ENCODE measurements at regions of chr1 and their contacts with region 1.

Region 1: GRCh38 chr1:10398734-10399623 is at the start of gene PGD:
- DNase-seq: peak; percentile 98
- H3K4me3 Mint-ChIP-seq: peak within 1 kb of the TSS; percentile 83
- H3K27ac Mint-ChIP-seq: no peak within 1 kb of the TSS
- H3K4me1 Mint-ChIP-seq: peaks cover 25% of the 10 kb centered on the region
- H3K27me3 Mint-ChIP-seq: no peaks in the 10 kb centered on the region
- total RNA-seq, gene PGD: 94.8 to 101 TPM

Region 2: DNA sequence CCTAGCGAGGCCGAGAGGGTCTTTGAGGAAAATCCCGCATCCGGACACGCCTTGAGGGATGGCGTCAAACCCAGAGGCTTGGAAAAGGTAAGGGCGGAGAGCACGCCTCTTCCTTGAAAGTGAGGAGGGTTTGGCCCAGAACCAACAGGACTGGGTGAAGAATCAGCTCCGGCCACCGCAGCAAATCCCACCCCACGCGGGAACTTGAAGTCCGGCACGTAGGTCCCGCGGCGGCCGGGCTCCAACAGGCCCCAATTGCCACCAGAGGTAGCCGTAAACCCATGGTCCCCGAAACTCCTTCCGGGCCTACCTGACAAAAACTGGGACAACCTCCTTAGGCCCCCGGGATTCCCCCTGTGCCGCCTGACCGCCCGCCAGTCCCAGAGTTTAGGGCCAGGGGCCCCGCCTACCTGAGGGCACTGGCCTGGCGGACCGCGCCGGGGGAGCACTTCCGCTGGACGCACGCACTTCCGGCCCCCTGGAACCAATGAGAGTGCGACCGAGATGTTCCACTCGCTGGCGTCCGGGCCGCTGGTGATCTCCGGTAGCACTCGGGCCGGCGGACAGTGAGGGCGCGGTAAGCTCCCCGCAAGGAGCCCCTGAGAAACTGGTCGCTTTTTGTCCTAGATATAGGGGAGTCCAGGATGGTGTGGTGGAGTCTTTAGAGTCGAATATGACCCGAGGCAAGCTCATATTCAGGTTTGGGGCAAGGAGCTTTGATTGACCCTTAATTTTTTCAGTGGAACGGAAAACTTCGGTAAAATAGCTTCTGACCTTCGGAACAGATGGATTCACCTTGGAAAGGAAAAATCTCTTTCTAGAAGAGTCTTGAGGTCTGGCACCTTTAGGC is 455.8 kb before region 1 on chr1 and contains the starts of genes LZIC and NMNAT1:
- CTCF ChIA-PET with region 1: no interaction called
- intact Hi-C with region 1: loop called (anchors 1 kb)
- DNase-seq: peak; percentile 94
- H3K4me3 Mint-ChIP-seq: peak within 1 kb of the TSS; percentile 95
- H3K27ac Mint-ChIP-seq: peak within 1 kb of the TSS; percentile 92
- H3K4me1 Mint-ChIP-seq: peaks cover 27% of the 10 kb centered on the region
- H3K27me3 Mint-ChIP-seq: no peaks in the 10 kb centered on the region
- total RNA-seq, gene LZIC: 26.1 to 27.0 TPM
- total RNA-seq, gene NMNAT1: 7.5 to 8.0 TPM

Region 3: GRCh38 chr1:10472220-10473144 is 73.5 kb after region 1 on chr1 and contains the start of gene DFFA:
- CTCF ChIA-PET with region 1: no interaction called
- intact Hi-C with region 1: loop called (anchors 2 kb)
- DNase-seq: peak; percentile 97
- H3K4me3 Mint-ChIP-seq: peak within 1 kb of the TSS; percentile 90
- H3K27ac Mint-ChIP-seq: peak within 1 kb of the TSS; percentile 84
- H3K4me1 Mint-ChIP-seq: peaks cover 38% of the 10 kb centered on the region
- H3K27me3 Mint-ChIP-seq: no peaks in the 10 kb centered on the region
- total RNA-seq, gene DFFA: 34.2 to 36.1 TPM